ENCODE measurements at regions of chr14 and their contacts with region 1.

Region 1: GRCh38 chr14:93137864-93138263 is 22.1 kb upstream of the ITPK1 start:
- DNase-seq: no peak
- H3K4me3 ChIP-seq: no peak overlapping the region
- H3K4me3 Mint-ChIP-seq: no peak overlapping the region
- H3K27ac ChIP-seq: no peak overlapping the region
- H3K27ac Mint-ChIP-seq: peak overlapping the region in 1 of 7 donors; percentile 48
- H3K4me1 ChIP-seq: no peaks in the 10 kb centered on the region
- H3K4me1 Mint-ChIP-seq: peaks cover 0 to 5% (median 2%) of the 10 kb centered on the region in 4 donors
- H3K27me3 ChIP-seq: no peaks in the 10 kb centered on the region
- H3K27me3 Mint-ChIP-seq: peaks cover 0 to 2% of the 10 kb centered on the region in 2 donors

Region 2: GRCh38 chr14:93033983-93034670 is 103.7 kb before region 1 on chr14:
- CTCF ChIA-PET with region 1: interaction called, 4 read pairs
- POLR2A ChIA-PET with region 1: no interaction called
- intact Hi-C with region 1: loop called (anchors 1 kb)
- DNase-seq: peak in 3 of 5 donors; percentile 12 to 28 (median 23)
- H3K4me3 ChIP-seq: no peak overlapping the region
- H3K4me3 Mint-ChIP-seq: peak overlapping the region in 4 of 8 donors; percentile 32 to 68 (median 59)
- H3K27ac ChIP-seq: no peak overlapping the region
- H3K27ac Mint-ChIP-seq: peak overlapping the region in 6 of 7 donors; percentile 32 to 82 (median 64)
- H3K4me1 ChIP-seq: peaks cover 21% of the 10 kb centered on the region
- H3K4me1 Mint-ChIP-seq: peaks cover 13 to 40% (median 28%) of the 10 kb centered on the region in 4 donors
- H3K27me3 ChIP-seq: no peaks in the 10 kb centered on the region
- H3K27me3 Mint-ChIP-seq: no peaks in the 10 kb centered on the region

Region 3: GRCh38 chr14:93150227-93151206 is 12.7 kb after region 1 on chr14:
- CTCF ChIA-PET with region 1: no interaction called
- POLR2A ChIA-PET with region 1: no interaction called
- intact Hi-C with region 1: no loop called
- DNase-seq: no peak
- H3K4me3 ChIP-seq: no peak overlapping the region
- H3K4me3 Mint-ChIP-seq: peak overlapping the region in 1 of 8 donors; percentile 0
- H3K27ac ChIP-seq: no peak overlapping the region
- H3K27ac Mint-ChIP-seq: peak overlapping the region in 1 of 7 donors; percentile 30
- H3K4me1 ChIP-seq: no peaks in the 10 kb centered on the region
- H3K4me1 Mint-ChIP-seq: peaks cover 0 to 9% (median 4%) of the 10 kb centered on the region in 4 donors
- H3K27me3 ChIP-seq: no peaks in the 10 kb centered on the region
- H3K27me3 Mint-ChIP-seq: peaks cover 0 to 4% of the 10 kb centered on the region in 2 donors

Region 4: GRCh38 chr14:93161411-93161940 is 23.6 kb after region 1 on chr14:
- CTCF ChIA-PET with region 1: no interaction called
- POLR2A ChIA-PET with region 1: no interaction called
- intact Hi-C with region 1: no loop called
- DNase-seq: no peak
- H3K4me3 ChIP-seq: no peak overlapping the region
- H3K4me3 Mint-ChIP-seq: no peak overlapping the region
- H3K27ac ChIP-seq: no peak overlapping the region
- H3K27ac Mint-ChIP-seq: no peak overlapping the region
- H3K4me1 ChIP-seq: no peaks in the 10 kb centered on the region
- H3K4me1 Mint-ChIP-seq: no peaks in the 10 kb centered on the region
- H3K27me3 ChIP-seq: no peaks in the 10 kb centered on the region
- H3K27me3 Mint-ChIP-seq: no peaks in the 10 kb centered on the region

Region 5: GRCh38 chr14:93200553-93200952 is 62.7 kb after region 1 on chr14:
- CTCF ChIA-PET with region 1: no interaction called
- POLR2A ChIA-PET with region 1: no interaction called
- intact Hi-C with region 1: no loop called
- DNase-seq: no peak
- H3K4me3 ChIP-seq: no peak overlapping the region
- H3K4me3 Mint-ChIP-seq: no peak overlapping the region
- H3K27ac ChIP-seq: no peak overlapping the region
- H3K27ac Mint-ChIP-seq: no peak overlapping the region
- H3K4me1 ChIP-seq: peaks cover 13% of the 10 kb centered on the region
- H3K4me1 Mint-ChIP-seq: peaks cover 10 to 20% (median 13%) of the 10 kb centered on the region in 4 donors
- H3K27me3 ChIP-seq: no peaks in the 10 kb centered on the region
- H3K27me3 Mint-ChIP-seq: no peaks in the 10 kb centered on the region

Region 6: DNA sequence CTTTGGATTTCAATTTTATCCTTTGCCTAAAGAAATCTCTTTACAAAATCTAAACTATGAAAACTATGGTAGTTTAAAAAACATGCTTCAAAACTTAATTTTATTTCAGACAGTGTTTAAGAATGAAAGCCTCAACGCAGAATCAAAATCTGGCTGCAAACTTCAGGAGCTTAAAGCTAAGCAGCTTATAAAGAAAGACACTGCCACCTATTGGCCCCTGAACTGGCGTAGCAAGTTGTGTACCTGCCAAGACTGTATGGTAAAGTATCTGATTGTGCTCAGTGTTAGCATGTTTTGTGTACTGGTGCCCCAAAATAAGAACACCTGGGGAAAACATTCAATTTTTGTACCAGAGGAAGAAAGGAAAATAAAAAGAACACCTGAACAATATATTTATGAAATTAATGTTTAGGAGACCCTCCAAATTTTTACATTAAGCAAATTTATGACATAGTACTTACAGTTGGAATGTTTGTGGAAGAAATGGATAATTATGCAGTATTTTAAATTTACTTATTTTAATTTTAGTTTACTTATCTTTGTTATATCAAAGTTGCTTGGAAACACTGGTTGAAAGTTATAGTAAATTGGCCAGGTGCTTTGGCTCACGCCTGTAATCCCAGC is 81.4 kb after region 1 on chr14:
- CTCF ChIA-PET with region 1: interaction called, 3 read pairs
- POLR2A ChIA-PET with region 1: no interaction called
- intact Hi-C with region 1: loop called (anchors 1 kb)
- DNase-seq: peak; percentile 43 to 69 (median 52)
- H3K4me3 ChIP-seq: no peak overlapping the region
- H3K4me3 Mint-ChIP-seq: no peak overlapping the region
- H3K27ac ChIP-seq: no peak overlapping the region
- H3K27ac Mint-ChIP-seq: no peak overlapping the region
- H3K4me1 ChIP-seq: no peaks in the 10 kb centered on the region
- H3K4me1 Mint-ChIP-seq: peaks cover 0 to 2% (median 0%) of the 10 kb centered on the region in 4 donors
- H3K27me3 ChIP-seq: no peaks in the 10 kb centered on the region
- H3K27me3 Mint-ChIP-seq: no peaks in the 10 kb centered on the region

Region 7: GRCh38 chr14:93239869-93240677 is 102.2 kb after region 1 on chr14:
- CTCF ChIA-PET with region 1: no interaction called
- POLR2A ChIA-PET with region 1: no interaction called
- intact Hi-C with region 1: no loop called
- DNase-seq: no peak
- H3K4me3 ChIP-seq: no peak overlapping the region
- H3K4me3 Mint-ChIP-seq: no peak overlapping the region
- H3K27ac ChIP-seq: no peak overlapping the region
- H3K27ac Mint-ChIP-seq: no peak overlapping the region
- H3K4me1 ChIP-seq: no peaks in the 10 kb centered on the region
- H3K4me1 Mint-ChIP-seq: peaks cover 0 to 3% (median 1%) of the 10 kb centered on the region in 4 donors
- H3K27me3 ChIP-seq: no peaks in the 10 kb centered on the region
- H3K27me3 Mint-ChIP-seq: peaks cover 0 to 2% of the 10 kb centered on the region in 2 donors

Measured in CD4-positive, alpha-beta memory T cell (primary cell).